MCF 10A (cell line): ENCODE measurements at regions of chr10 and their contacts with region 1.

Region 1: DNA sequence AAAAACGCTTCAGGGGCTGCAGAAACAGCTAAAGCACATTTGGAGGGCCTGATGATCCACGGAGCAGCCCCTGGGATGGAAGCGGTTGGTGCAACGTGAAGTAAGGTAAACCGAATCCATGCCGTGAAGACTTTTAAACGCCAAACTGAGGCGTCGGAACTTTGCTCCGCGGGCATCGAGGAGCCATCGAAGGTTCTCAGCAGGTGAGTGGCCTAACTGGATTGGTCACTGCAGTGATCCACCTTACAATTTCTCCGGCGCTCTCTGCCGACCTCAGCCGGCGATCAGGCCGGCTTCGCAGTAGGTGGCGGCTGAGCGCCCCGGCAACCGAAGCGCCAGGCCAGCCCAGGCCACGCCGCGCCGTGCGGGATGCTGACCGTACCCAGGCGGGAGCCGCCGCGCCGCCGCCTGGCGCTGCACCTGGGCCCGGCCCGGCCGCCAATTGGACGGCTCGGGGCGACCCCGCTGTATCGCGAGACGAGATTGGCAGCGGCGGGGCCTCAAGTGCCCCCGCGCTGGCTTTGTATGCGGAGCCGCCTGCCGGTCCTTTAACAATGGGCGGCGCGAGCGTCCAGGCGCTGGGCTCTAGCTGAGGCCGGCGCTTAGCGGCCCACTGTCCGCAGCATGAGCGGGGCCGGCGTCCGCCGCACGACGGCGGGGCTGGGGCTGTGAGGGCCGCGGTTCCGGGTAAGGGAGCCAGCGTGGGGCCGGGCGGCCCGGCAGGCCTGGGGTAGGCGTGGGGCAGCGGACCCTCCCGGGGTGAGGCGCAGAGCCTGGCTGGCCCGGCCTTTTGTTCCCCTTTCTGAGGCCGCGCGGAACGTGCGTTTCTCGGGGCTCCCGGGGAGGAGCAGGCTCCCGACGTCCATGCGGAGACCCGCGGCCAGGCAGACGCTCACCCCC is at the start of gene CCNJ:
- DNase-seq: peak; percentile 90
- H3K4me3 Mint-ChIP-seq: peak within 1 kb of the TSS; percentile 91
- H3K27ac Mint-ChIP-seq: peak within 1 kb of the TSS; percentile 94
- H3K4me1 Mint-ChIP-seq: peaks cover 26% of the 10 kb centered on the region
- H3K27me3 Mint-ChIP-seq: peaks cover 8% of the 10 kb centered on the region
- CTCF ChIP-seq: peak; percentile 6
- total RNA-seq, gene CCNJ: 9.3 and 10.8 TPM in 2 replicates

Region 2: GRCh38 chr10:95741807-95742467 is 301.3 kb before region 1 on chr10:
- CTCF ChIA-PET with region 1: no interaction called
- POLR2A ChIA-PET with region 1: no interaction called
- intact Hi-C with region 1: no loop called
- DNase-seq: no peak
- H3K4me3 Mint-ChIP-seq: no peak overlapping the region
- H3K27ac Mint-ChIP-seq: no peak overlapping the region
- H3K4me1 Mint-ChIP-seq: no peaks in the 10 kb centered on the region
- H3K27me3 Mint-ChIP-seq: no peaks in the 10 kb centered on the region
- CTCF ChIP-seq: no peak

Region 3: DNA sequence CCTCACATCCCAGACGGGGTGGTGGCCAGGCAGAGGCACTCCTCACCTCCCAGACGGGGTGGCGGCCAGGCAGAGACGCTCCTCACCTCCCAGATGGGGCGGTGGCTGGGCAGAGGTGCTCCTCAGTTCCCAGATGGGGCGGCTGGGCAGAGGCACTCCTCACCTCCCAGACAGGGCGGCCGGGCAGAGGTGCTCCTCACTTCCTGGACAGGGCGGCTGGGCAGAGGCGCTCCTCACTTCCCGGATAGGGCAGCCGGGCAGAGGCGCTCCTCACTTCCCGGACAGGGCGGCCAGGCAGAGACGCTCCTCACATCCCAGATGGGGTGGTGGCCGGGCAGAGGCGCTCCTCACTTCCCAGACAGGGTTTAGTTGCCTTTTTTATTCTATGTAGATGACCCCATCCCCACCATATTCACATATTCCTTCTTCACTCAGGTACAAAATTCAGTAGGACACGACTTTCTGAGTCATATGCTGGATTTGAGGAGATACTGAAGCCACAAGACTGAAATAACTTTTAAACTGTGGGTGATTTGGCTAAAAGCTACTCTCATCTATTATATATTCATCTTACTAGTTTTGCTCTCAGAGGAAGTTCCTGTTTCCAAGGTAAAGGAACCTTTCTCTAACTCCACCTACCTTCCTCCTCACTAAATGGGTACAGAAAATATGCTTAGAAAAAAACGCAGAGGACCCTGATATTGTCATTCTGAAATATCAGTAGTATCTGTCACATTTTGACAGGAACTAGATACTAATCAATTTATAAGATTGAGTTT is 232.9 kb before region 1 on chr10:
- CTCF ChIA-PET with region 1: no interaction called
- POLR2A ChIA-PET with region 1: no interaction called
- intact Hi-C with region 1: no loop called
- DNase-seq: no peak
- H3K4me3 Mint-ChIP-seq: no peak overlapping the region
- H3K27ac Mint-ChIP-seq: no peak overlapping the region
- H3K4me1 Mint-ChIP-seq: no peaks in the 10 kb centered on the region
- H3K27me3 Mint-ChIP-seq: no peaks in the 10 kb centered on the region
- CTCF ChIP-seq: no peak

Region 4: GRCh38 chr10:96053985-96054384 is 10.7 kb after region 1 on chr10:
- CTCF ChIA-PET with region 1: interaction called, 10 read pairs
- POLR2A ChIA-PET with region 1: interaction called, 5 read pairs
- intact Hi-C with region 1: no loop called
- DNase-seq: no peak
- H3K4me3 Mint-ChIP-seq: no peak overlapping the region
- H3K27ac Mint-ChIP-seq: no peak overlapping the region
- H3K4me1 Mint-ChIP-seq: no peaks in the 10 kb centered on the region
- H3K27me3 Mint-ChIP-seq: no peaks in the 10 kb centered on the region
- CTCF ChIP-seq: no peak

Region 5: DNA sequence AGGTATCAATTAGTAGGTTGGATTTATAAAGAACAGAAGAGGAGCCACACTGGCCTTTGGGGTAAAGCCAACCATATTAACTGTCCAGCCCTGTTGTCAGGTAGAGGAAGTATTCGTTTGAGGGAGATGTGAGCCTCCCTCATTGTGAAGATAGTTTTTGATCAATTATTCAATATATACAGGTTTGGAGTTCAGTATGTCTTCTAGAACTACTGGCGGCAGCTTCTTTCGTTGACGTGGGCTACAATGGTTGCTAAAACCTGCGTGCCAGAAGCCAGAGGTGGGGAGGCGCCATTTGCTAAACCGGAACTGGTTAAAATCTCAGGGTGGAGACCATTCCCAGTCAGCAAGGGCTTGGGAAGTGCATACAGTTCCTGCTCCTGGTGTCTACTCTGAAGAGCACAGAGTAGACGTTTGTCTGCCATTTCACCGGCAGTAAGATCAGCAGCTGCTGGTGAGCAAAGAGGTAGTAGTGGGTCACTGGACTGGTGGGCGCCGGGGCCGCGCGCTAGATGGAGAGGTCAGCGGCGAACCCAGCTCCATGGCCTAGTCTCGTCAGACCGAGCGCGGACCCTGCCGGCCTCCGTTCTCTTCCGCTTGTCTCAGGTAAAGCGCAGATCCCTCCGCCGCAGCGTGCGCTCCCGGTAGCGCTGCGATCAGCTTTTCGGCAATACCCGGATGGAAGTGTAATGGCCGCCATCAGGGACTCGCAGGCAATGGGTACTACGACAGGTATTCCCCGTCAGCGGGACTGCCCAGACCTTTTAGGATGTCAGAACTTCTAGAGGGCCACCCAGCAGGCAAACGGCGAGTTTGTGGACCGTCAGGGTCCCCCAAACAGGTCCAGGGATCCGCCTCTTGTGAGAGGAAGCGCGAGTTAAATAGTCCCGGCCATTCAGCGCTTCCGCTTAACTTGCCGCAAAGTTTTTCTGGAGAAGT is 86.4 kb after region 1 on chr10 and contains the start of gene ZNF518A:
- CTCF ChIA-PET with region 1: interaction called, 5 read pairs
- POLR2A ChIA-PET with region 1: interaction called, 27 read pairs
- intact Hi-C with region 1: loop called (anchors 2 kb)
- DNase-seq: peak; percentile 90
- H3K4me3 Mint-ChIP-seq: peak within 1 kb of the TSS; percentile 84
- H3K27ac Mint-ChIP-seq: peak within 1 kb of the TSS; percentile 99
- H3K4me1 Mint-ChIP-seq: peaks cover 10% of the 10 kb centered on the region
- H3K27me3 Mint-ChIP-seq: no peaks in the 10 kb centered on the region
- CTCF ChIP-seq: no peak
- total RNA-seq, gene ZNF518A: 13.3 and 14.7 TPM in 2 replicates